Activated B cell treated with CpG ODN at 0.5 μM for 24 hours (primary cell): ENCODE measurements at regions of chr7 and their contacts with region 1.

Region 1: DNA sequence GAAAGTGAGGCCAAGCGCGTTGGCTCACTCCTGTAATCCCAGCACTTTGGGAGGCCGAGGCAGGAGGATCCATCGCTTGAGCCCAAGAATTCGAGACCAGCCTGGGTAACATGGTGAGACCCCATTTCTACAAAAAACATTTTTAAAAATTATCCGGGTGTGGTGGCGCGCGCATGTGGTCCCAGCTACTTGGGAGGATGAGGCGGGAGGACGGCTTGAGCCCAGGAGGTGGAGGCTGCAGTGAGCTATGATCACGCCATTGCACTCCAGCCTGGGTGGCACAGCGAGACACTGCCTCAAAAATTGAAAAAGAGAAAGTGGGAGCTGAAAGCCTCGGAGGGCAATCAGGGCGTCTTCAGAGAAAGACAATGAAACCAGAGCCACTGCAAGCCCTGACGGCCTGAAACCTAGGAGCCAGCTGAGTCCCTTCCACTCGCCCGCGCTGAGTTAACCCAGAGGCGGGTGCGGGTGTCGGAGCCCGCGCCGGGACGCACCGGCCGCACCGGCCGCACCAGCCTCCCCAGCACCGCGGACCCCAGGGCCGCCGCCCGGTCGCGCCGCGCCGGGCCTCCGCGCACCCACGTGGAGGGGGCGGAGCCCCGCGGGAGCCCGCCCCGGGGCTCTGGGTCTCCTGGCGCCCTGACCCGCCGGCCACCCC is 22.4 kb downstream of the ZFAND2A start:
- DNase-seq: no peak
- ATAC-seq: peak; percentile 62
- H3K4me3 Mint-ChIP-seq: peak overlapping the region; percentile 86
- H3K27ac Mint-ChIP-seq: peak overlapping the region; percentile 70
- H3K4me1 Mint-ChIP-seq: peaks cover 52% of the 10 kb centered on the region
- H3K27me3 Mint-ChIP-seq: no peaks in the 10 kb centered on the region
- CTCF ChIP-seq: no peak

Region 2: DNA sequence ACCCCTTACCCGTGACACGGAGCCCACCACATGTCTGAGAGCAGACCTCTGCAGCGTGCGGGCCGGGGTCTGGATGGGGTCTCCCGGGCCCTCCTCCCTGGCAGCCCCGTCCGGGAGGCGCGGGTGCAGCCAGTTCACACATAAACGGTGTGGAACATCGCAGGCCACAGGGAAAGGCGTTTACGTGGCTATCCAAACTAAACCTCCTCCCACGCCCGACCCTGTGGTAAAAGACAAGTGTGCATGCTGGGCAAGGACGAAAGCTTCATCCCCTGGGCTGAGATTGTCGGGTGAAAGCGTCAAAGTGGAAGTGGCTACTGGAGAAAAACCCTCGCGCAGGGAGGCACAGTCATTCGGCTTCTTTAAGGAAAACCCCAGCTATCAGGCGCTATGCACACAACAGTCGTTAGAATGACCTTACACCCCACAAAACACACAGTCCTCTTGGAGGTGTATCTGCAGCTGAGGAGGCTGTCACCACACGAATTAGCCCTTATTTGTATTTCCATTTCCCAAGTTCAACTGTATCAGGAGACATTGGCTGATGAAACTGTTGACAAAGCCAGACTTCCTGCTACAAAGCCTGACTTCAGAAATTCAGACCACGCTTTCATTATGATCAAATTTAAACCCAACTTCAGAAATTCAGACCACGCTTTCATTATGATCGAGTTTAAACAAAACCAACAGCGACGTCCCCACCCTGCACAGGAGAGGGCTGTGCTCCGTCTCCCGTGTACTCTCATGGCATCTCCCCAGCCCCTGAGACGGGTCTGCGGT is 34.4 kb before region 1 on chr7:
- CTCF ChIA-PET with region 1: no interaction called
- POLR2A ChIA-PET with region 1: no interaction called
- intact Hi-C with region 1: loop called (anchors 1 kb)
- DNase-seq: no peak
- ATAC-seq: peak; percentile 46
- H3K4me3 Mint-ChIP-seq: peak overlapping the region; percentile 70
- H3K27ac Mint-ChIP-seq: peak overlapping the region; percentile 76
- H3K4me1 Mint-ChIP-seq: peaks cover 30% of the 10 kb centered on the region
- H3K27me3 Mint-ChIP-seq: peaks cover 13% of the 10 kb centered on the region
- CTCF ChIP-seq: no peak

Region 3: DNA sequence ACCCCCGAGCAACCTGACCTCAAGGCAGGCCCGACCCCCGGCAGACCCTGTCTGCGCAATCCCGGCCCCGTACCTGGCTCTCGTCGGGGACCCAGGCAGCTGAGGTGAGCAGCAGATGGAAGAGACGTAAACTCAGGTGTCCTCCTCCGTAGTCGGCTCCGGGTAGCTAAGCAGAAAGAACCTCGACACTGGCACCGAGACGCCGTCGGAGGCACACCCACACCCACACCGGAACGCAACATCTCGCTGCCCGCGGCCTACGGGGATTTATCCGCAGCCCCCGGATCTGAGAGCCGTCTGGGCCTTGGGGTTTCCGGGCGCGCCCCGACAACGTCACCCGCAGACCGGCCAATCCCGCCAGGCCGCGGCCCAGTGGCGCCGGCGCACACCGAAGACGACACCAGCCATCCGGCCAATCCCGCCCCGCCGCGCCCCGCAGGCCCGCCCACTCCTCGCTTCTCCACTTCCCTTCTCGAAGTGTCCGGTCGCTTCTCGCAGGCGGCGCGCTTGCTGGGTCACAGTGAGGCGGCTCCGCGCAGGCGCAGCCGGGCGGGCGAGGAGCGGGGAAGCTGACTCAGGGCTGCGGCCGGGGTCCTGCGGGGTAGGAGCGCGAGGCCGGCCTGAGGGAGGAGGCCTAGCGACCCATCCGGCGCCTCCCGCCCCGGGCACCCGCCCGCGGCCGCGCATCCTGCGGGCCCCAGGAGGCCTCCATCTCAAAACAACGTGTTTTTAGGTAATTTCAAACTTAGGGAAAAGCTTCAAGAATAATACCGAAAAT is 22.4 kb after region 1 on chr7 and contains the start of gene ZFAND2A:
- CTCF ChIA-PET with region 1: no interaction called
- POLR2A ChIA-PET with region 1: interaction called, 18 read pairs
- intact Hi-C with region 1: loop called (anchors 1 kb)
- DNase-seq: peak; percentile 99
- ATAC-seq: peak; percentile 97
- H3K4me3 Mint-ChIP-seq: peak within 1 kb of the TSS; percentile 88
- H3K27ac Mint-ChIP-seq: peak within 1 kb of the TSS; percentile 79
- H3K4me1 Mint-ChIP-seq: peaks cover 25% of the 10 kb centered on the region
- H3K27me3 Mint-ChIP-seq: no peaks in the 10 kb centered on the region
- CTCF ChIP-seq: no peak
- total RNA-seq, gene ZFAND2A: 20.4 and 21.6 TPM in 2 replicates

Region 4: DNA sequence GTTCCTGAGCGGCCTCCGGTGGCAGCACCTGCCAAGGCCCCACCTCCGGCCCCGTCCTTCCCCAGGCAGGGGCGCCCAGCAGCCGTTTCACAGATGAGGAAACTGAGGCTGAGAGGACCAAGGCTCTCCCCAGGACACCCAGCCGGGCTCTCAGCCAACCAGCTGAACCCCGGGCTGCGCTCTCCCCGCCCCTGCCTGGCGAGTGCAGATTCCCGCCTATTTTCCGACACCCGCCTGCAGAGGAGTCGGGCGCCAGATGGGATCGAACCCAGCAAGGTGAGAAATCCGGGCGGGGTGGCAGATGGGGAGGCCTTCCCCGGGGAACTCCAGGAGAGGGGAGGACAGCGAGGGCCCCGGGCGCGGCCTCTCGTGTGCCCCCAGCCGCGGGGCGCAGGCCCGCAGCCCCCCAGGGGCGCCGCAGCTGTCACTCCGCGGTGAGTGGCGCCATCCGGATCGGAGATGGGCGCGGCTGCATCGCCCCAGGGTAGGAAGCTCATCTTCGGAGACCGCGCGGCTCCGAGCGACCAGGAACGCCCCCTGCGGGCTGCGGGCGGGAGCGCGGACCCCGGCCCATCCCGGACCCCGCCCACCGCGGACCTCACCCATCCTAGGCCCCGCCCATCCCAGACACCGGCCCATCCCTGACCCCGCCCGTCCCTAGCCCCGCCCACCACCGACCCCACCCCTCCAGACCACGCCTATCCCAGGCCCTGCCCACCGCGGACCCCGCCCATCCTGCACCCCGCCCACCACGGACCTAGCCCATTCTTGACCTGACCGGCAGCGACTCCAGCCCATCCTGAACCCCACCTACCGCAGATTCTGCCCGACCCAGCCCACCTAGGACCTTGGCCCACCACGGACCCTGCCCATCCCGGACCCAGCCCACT is 231.3 kb after region 1 on chr7:
- CTCF ChIA-PET with region 1: no interaction called
- POLR2A ChIA-PET with region 1: no interaction called
- intact Hi-C with region 1: no loop called
- DNase-seq: no peak
- ATAC-seq: peak; percentile 58
- H3K4me3 Mint-ChIP-seq: peak overlapping the region; percentile 38
- H3K27ac Mint-ChIP-seq: no peak overlapping the region
- H3K4me1 Mint-ChIP-seq: peaks cover 2% of the 10 kb centered on the region
- H3K27me3 Mint-ChIP-seq: peaks cover 44% of the 10 kb centered on the region
- CTCF ChIP-seq: no peak